ENCODE measurements at regions of chr7 and their contacts with region 1.

Region 1: DNA sequence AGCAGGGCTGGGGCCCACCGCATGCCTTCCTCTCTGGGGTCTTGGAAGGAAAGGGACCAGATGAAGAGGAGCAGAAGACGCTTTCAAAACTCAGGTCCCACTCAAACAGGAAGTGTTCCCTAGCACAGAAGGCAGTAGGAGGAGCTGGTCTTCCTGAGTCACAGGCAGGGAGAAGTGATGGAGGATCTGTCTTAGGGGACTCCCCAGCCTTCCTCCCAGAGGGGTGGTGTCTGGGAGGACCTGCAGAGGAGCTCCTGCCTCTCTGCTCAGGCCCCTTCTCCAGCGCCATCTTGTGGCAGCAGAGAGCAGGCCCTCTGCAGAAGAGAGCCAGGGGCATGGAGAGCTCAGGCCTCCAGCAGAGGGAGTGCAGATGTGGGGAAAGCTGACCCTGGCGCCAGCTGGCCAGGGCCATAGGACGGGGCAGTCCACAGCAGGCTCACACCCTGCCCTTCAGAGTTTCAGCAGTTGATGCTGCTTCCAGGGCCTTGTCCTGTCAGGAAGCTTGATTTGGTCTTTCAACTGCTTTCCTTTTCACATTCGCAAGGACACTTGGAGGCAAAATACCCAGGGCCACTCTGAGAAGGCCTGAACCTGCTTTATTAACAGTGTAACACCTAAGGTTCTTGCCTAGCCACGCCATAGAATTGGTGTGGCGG is 62.2 kb upstream of the TARP start:
- DNase-seq: peak; percentile 91
- ATAC-seq: peak; percentile 95
- H3K4me3 Mint-ChIP-seq: peak overlapping the region; percentile 65
- H3K27ac Mint-ChIP-seq: peak overlapping the region; percentile 80
- H3K4me1 Mint-ChIP-seq: peaks cover 42% of the 10 kb centered on the region
- H3K27me3 Mint-ChIP-seq: no peaks in the 10 kb centered on the region

Region 2: DNA sequence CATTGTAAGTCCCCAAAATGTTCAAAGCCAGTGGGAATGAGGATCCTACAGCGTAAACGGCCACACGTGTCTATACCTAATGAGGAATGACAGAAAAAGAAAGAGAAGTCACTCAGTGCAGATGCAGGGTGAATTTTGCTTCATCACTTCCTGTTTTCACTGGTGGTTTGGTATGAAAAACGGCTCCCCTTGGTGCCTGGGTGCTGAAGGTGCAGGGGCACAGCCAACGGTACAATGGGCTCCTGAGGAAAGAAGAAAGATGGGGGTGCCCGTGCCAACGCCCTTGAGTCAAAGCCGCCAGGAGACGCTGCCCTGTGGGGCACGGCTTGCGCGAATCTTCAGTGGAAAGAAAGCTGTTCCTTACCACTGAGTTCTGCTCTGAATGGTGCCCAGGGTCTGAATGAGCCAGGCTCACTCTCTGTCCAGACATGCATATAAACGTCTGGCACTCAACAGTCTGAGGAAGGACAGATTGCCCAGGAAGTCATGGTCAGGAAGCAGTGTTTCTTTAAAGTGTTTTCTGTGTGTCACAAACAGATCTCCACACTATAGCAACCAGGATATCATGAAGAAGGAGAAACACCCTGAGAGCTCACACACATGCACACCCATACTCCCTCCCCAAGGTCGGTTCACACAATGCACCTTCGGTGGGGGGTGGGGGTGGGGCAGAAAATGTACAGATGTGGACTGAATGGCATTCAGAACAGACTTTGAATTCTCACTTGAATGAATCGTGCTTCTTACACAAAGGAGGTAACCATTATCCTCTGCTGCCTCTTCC is 992.7 kb before region 1 on chr7:
- CTCF ChIA-PET with region 1: no interaction called
- POLR2A ChIA-PET with region 1: no interaction called
- intact Hi-C with region 1: loop called in 1 of 2 experiments (anchors 10 kb)
- DNase-seq: peak; percentile 85
- ATAC-seq: peak; percentile 83
- H3K4me3 Mint-ChIP-seq: peak overlapping the region; percentile 89
- H3K27ac Mint-ChIP-seq: peak overlapping the region; percentile 95
- H3K4me1 Mint-ChIP-seq: peaks cover 77% of the 10 kb centered on the region
- H3K27me3 Mint-ChIP-seq: no peaks in the 10 kb centered on the region

Region 3: GRCh38 chr7:37541810-37542443 is 793.7 kb before region 1 on chr7:
- CTCF ChIA-PET with region 1: no interaction called
- POLR2A ChIA-PET with region 1: no interaction called
- intact Hi-C with region 1: no loop called
- DNase-seq: no peak
- ATAC-seq: no peak
- H3K4me3 Mint-ChIP-seq: no peak overlapping the region
- H3K27ac Mint-ChIP-seq: no peak overlapping the region
- H3K4me1 Mint-ChIP-seq: no peaks in the 10 kb centered on the region
- H3K27me3 Mint-ChIP-seq: peaks cover 2% of the 10 kb centered on the region

Region 4: GRCh38 chr7:38107486-38107893 is 228.1 kb before region 1 on chr7:
- CTCF ChIA-PET with region 1: interaction called, 8 read pairs
- POLR2A ChIA-PET with region 1: no interaction called
- intact Hi-C with region 1: loop called (anchors 1 to 5 kb)
- DNase-seq: peak; percentile 80
- ATAC-seq: peak; percentile 85
- H3K4me3 Mint-ChIP-seq: no peak overlapping the region
- H3K27ac Mint-ChIP-seq: no peak overlapping the region
- H3K4me1 Mint-ChIP-seq: no peaks in the 10 kb centered on the region
- H3K27me3 Mint-ChIP-seq: peaks cover 16% of the 10 kb centered on the region

Region 5: DNA sequence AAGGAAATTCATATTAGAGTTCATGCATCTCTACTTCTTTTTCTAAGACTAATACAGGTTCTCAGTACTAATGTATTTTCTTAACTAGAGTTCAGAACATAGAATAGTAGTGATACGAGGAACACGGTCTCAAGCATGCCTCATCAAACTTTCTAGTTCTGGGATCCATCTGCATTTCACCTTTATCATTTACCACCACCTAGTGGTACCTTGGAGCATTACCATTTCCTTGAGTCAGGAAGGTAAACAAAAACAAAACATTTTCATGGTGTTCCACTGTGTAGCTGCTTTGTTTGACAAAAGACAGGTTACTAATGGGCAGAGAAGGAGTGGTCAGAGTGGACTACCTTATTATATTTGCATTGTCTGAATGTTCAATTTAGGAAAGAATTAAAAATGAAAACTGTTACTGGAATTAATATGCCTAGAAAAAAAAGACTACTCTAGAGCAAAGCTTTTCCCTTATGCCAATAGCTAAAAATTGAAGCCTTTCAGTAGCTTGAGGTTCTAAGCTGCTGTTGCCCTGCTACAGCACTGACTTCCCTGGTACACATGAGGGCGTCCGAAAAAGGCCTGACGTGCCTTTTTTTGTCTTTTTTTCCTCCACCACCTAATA is 113.0 kb before region 1 on chr7:
- CTCF ChIA-PET with region 1: interaction called, 80 read pairs
- POLR2A ChIA-PET with region 1: no interaction called
- intact Hi-C with region 1: loop called in 1 of 2 experiments (anchors 5 kb)
- DNase-seq: no peak
- ATAC-seq: peak; percentile 51
- H3K4me3 Mint-ChIP-seq: no peak overlapping the region
- H3K27ac Mint-ChIP-seq: no peak overlapping the region
- H3K4me1 Mint-ChIP-seq: peaks cover 20% of the 10 kb centered on the region
- H3K27me3 Mint-ChIP-seq: no peaks in the 10 kb centered on the region

Region 6: DNA sequence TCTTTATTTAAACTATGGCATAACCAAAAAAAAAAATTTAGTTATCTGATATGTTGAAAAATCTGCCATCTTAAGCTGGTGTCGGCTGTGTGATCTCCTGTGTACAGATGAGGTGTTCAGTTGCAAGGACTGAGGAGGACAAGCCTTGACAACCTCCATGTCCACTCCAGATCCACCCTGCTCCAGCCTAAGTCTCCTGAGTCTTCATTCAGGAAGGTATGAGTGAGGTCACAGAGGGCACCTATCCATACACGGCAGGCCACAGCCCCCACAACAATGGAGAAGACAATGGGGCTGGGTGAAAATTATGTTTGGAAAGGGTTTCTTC is 78.3 kb before region 1 on chr7:
- CTCF ChIA-PET with region 1: interaction called, 4 read pairs
- POLR2A ChIA-PET with region 1: no interaction called
- intact Hi-C with region 1: loop called in 1 of 2 experiments (anchors 2 kb)
- DNase-seq: no peak
- ATAC-seq: no peak
- H3K4me3 Mint-ChIP-seq: no peak overlapping the region
- H3K27ac Mint-ChIP-seq: no peak overlapping the region
- H3K4me1 Mint-ChIP-seq: no peaks in the 10 kb centered on the region
- H3K27me3 Mint-ChIP-seq: no peaks in the 10 kb centered on the region

Region 7: GRCh38 chr7:38318803-38319416 is 16.7 kb before region 1 on chr7:
- CTCF ChIA-PET with region 1: interaction called, 13 read pairs
- POLR2A ChIA-PET with region 1: no interaction called
- intact Hi-C with region 1: no loop called
- DNase-seq: peak; percentile 22
- ATAC-seq: peak; percentile 77
- H3K4me3 Mint-ChIP-seq: no peak overlapping the region
- H3K27ac Mint-ChIP-seq: no peak overlapping the region
- H3K4me1 Mint-ChIP-seq: peaks cover 18% of the 10 kb centered on the region
- H3K27me3 Mint-ChIP-seq: no peaks in the 10 kb centered on the region

Region 8: GRCh38 chr7:38351601-38352000 is 16.0 kb after region 1 on chr7:
- CTCF ChIA-PET with region 1: interaction called, 28 read pairs
- POLR2A ChIA-PET with region 1: no interaction called
- intact Hi-C with region 1: no loop called
- DNase-seq: no peak
- ATAC-seq: no peak
- H3K4me3 Mint-ChIP-seq: peak overlapping the region; percentile 85
- H3K27ac Mint-ChIP-seq: no peak overlapping the region
- H3K4me1 Mint-ChIP-seq: peaks cover 20% of the 10 kb centered on the region
- H3K27me3 Mint-ChIP-seq: no peaks in the 10 kb centered on the region

Measured in activated CD4-positive, alpha-beta T cell treated with anti-CD3 and anti-CD28 coated beads for 36 hours (primary cell).